OCI-LY7 (cell line): ENCODE measurements at regions of chr10 and their contacts with region 1.

Region 1: GRCh38 chr10:100743626-100744135 is 1.7 kb upstream of the PAX2 start:
- DNase-seq: peak; percentile 70
- H3K4me3 ChIP-seq: no peak overlapping the region
- H3K27ac ChIP-seq: no peak overlapping the region
- H3K4me1 ChIP-seq: no peaks in the 10 kb centered on the region
- CTCF ChIP-seq: peak; percentile 85

Region 2: DNA sequence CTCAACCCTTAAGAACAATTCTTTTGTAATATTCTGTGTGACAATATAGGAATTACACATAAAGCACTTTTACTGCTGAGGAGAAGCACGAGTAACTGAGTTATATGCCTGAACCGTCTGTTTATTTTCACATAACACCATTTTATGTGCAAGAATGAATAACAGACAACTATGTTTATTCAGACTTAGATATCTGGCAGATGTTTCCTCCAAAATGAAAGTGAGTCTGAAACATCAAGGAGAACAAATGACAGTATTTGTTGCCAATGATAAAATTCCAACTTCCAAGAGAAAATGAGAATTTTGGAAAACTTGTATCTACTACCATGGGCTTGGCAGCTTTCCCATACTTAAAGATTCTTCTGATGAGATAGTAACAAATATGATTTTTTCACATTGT is 785.4 kb before region 1 on chr10:
- CTCF ChIA-PET with region 1: no interaction called
- POLR2A ChIA-PET with region 1: no interaction called
- intact Hi-C with region 1: no loop called
- DNase-seq: no peak
- H3K4me3 ChIP-seq: no peak overlapping the region
- H3K27ac ChIP-seq: no peak overlapping the region
- H3K4me1 ChIP-seq: peaks cover 6% of the 10 kb centered on the region
- CTCF ChIP-seq: no peak

Region 3: DNA sequence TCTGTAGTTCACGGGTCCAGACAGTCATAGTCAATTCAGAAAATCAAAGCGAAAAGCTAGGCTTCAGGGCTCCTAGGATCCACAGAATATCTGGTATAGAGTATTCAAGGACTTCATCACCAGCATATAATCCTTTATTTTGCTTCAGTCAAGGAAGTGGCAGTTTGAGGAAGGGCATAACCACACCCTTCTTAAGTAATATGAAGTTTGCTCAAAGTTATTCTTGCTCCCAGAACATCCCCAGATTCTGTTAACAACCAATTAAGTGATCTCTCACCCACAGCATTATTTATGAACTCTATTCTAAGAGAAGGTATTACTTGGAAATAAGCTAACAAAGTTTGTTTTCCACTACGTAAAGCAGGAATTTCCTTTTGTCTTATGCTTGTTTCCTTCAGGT is 489.5 kb before region 1 on chr10:
- CTCF ChIA-PET with region 1: no interaction called
- POLR2A ChIA-PET with region 1: no interaction called
- intact Hi-C with region 1: no loop called
- DNase-seq: no peak
- H3K4me3 ChIP-seq: no peak overlapping the region
- H3K27ac ChIP-seq: no peak overlapping the region
- H3K4me1 ChIP-seq: no peaks in the 10 kb centered on the region
- CTCF ChIP-seq: no peak

Region 4: DNA sequence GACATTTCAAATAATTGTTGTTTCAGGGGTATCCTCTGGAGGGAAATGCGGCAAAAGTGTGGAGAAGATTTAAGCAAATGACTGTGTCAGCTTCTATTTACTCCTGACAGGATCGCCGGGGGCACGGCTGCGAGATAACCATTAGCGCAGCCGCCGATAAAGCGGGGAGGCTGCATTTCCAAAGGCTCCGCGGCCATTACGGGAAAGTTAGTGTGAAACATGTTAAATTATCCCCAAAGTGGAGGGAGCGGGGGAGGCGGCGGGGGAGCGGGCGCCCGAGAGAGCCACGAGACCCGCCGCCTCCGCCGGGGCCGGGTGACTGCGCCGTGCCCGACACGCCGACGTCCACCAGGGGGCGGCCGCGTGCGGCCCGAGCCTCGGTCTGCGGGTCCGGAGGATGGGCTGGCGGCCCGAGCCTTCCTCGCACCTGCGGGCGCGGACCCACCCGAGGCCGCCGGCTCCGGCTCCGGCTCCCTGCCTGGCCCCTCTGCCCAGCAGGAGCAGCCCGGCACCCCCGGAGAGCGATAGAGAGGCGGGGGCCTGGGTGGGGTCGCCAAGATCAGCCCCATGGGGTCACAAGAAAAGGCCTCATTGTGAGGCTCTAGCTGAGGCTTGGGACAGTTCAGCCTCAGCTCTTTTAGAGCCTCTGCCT is 72.7 kb before region 1 on chr10:
- CTCF ChIA-PET with region 1: no interaction called
- POLR2A ChIA-PET with region 1: no interaction called
- intact Hi-C with region 1: loop called (anchors 1 kb)
- DNase-seq: peak; percentile 47
- H3K4me3 ChIP-seq: no peak overlapping the region
- H3K27ac ChIP-seq: no peak overlapping the region
- H3K4me1 ChIP-seq: no peaks in the 10 kb centered on the region
- CTCF ChIP-seq: peak; percentile 85